Left lung (tissue), 14 donors: ENCODE measurements at regions of chr1 and their contacts with region 1.

Region 1: DNA sequence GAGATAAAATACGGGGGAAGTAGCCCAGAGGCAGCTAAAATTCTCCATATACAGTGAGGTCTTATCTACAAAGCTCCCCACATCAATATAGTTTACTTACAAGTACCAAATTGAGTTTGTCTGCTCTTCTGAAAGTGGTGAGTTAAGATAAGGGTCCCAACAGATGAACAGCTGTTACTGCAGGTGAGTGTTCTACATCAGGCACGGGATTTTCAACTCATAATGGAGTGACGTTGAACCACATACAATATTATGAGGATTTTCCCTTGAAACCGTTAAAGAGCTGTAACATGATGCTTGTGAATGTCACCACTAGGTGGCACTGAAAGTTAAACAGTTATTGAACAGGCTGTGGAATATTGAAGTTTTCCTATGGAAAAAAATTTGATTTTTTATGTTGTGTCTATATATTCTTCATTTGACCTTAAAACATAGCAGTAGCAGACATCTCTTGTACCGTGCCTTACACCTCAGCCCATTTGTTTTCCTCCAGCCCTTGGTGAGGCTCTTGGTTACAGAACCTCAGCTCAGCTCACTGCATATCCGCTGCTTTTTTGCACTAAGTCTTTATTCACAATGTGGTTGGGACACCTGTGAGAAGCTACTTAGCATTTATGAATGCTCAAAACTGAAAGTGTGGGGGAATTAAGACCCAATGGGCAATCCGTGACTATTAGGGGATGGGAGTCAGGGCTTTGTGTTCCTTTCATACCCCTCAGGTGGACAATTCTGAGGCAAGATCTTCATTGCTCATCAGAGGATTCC is 23.2 kb downstream of the CD1D start:
- DNase-seq: peak in 2 of 4 donors; percentile 50 to 65
- ATAC-seq: peak; percentile 84
- H3K4me3 ChIP-seq: no peak overlapping the region
- H3K27ac ChIP-seq: no peak overlapping the region
- H3K4me1 ChIP-seq: peaks cover 0 to 4% of the 10 kb centered on the region in 2 donors
- H3K27me3 ChIP-seq: peaks cover 10 to 13% of the 10 kb centered on the region in 2 donors
- CTCF ChIP-seq: peak; percentile 77 to 80

Region 2: GRCh38 chr1:158998781-158999161 is 794.9 kb after region 1 on chr1:
- intact Hi-C with region 1: loop called in 1 of 2 experiments (anchors 10 kb)
- DNase-seq: peak in 3 of 4 donors; percentile 43 to 82 (median 77)
- ATAC-seq: peak; percentile 80
- H3K4me3 ChIP-seq: peak overlapping the region; percentile 18 to 21
- H3K27ac ChIP-seq: peak overlapping the region; percentile 85 to 90
- H3K4me1 ChIP-seq: peaks cover 0 to 37% of the 10 kb centered on the region in 2 donors
- H3K27me3 ChIP-seq: no peaks in the 10 kb centered on the region
- CTCF ChIP-seq: peak; percentile 80 to 91